MCF 10A (cell line): ENCODE measurements at regions of chr2 and their contacts with region 1.

Region 1: DNA sequence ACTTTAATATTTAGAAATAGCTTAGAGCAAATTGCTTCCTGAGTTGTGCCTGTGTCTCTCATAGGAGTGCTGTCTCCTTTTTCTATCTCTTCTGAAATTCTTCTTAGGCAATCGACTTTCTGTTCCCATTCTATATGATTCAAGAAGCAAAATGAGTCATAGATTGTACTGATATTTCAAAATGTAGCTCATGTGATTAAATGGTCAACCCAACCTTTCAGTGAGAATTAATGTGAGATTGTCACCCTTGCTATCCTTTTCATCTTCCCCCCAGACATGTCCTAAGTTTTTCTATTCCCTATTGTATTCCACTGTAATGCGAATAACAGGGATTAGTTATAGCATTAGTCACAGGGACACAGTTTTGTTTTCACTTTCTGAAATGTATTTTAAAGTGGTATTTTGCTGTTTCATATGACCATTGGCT is 413.6 kb downstream of the THSD7B start:
- DNase-seq: peak; percentile 88
- H3K4me3 Mint-ChIP-seq: peak overlapping the region; percentile 43
- H3K27ac Mint-ChIP-seq: peak overlapping the region; percentile 87
- H3K4me1 Mint-ChIP-seq: peaks cover 30% of the 10 kb centered on the region
- H3K27me3 Mint-ChIP-seq: no peaks in the 10 kb centered on the region
- CTCF ChIP-seq: no peak

Region 2: GRCh38 chr2:137168571-137168970 is 10.4 kb before region 1 on chr2:
- CTCF ChIA-PET with region 1: interaction called, 3 read pairs
- POLR2A ChIA-PET with region 1: interaction called, 23 read pairs
- intact Hi-C with region 1: no loop called
- DNase-seq: peak; percentile 85
- H3K4me3 Mint-ChIP-seq: peak overlapping the region; percentile 41
- H3K27ac Mint-ChIP-seq: peak overlapping the region; percentile 64
- H3K4me1 Mint-ChIP-seq: peaks cover 30% of the 10 kb centered on the region
- H3K27me3 Mint-ChIP-seq: no peaks in the 10 kb centered on the region
- CTCF ChIP-seq: no peak

Region 3: DNA sequence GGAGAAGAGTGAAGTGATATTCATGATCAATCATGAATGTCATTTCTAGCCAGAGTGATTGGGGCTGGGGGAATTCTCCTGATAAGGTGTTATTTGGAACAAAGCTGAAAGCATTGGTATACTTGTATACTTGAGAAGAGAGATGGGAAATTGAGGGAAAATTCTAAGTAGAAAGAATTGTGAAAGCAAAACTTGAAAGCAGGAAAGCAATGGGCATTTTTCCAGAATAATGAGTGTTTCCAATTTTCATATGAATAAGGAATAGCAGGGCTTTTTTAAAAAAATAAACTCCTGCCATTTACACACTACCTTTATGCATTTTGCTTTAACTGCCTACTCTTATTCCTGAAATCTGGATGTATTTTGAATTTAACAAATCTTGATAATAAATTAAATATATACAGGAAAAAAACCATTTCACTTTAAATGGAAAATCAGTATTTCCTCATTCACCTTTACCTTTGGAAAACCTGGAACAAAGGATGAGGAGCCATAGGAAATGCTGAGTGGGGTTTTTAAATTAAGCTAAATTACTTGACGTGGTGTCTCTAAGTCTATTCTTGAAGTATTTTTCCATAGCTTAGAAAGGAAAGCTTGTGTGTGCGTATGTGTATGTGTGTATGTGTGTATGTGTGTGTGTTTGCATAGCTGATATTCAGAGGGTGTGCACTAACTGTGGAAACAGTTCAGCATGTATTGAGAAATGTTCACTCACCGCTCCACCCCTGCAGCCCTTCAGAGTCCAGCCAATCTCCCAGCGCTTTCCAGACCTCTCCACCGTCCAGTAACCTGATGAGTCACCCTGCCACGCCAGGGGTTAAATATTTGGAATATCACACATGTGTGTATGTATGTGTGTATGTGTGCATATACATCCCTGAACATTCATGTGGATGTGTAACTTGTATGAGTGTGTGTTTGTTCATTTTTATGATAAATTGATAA is 13.7 kb after region 1 on chr2:
- CTCF ChIA-PET with region 1: interaction called, 3 read pairs
- POLR2A ChIA-PET with region 1: interaction called, 5 read pairs
- intact Hi-C with region 1: loop called (anchors 1 kb)
- DNase-seq: peak; percentile 85
- H3K4me3 Mint-ChIP-seq: peak overlapping the region; percentile 15
- H3K27ac Mint-ChIP-seq: peak overlapping the region; percentile 62
- H3K4me1 Mint-ChIP-seq: peaks cover 22% of the 10 kb centered on the region
- H3K27me3 Mint-ChIP-seq: no peaks in the 10 kb centered on the region
- CTCF ChIP-seq: no peak

Region 4: GRCh38 chr2:137287936-137288639 is 109.1 kb after region 1 on chr2:
- CTCF ChIA-PET with region 1: no interaction called
- POLR2A ChIA-PET with region 1: interaction called, 6 read pairs
- intact Hi-C with region 1: loop called (anchors 2 kb)
- DNase-seq: peak; percentile 81
- H3K4me3 Mint-ChIP-seq: peak overlapping the region; percentile 21
- H3K27ac Mint-ChIP-seq: peak overlapping the region; percentile 99
- H3K4me1 Mint-ChIP-seq: peaks cover 16% of the 10 kb centered on the region
- H3K27me3 Mint-ChIP-seq: no peaks in the 10 kb centered on the region
- CTCF ChIP-seq: no peak